ENCODE measurements at regions of chr20 and their contacts with region 1.

Region 1: GRCh38 chr20:60249436-60249835 is 291.2 kb downstream of the CDH26 start:
- DNase-seq: peak; percentile 81
- H3K4me3 ChIP-seq: no peak overlapping the region
- H3K27ac ChIP-seq: peak overlapping the region; percentile 71
- H3K27me3 ChIP-seq: no peaks in the 10 kb centered on the region
- CTCF ChIP-seq: no peak

Region 2: DNA sequence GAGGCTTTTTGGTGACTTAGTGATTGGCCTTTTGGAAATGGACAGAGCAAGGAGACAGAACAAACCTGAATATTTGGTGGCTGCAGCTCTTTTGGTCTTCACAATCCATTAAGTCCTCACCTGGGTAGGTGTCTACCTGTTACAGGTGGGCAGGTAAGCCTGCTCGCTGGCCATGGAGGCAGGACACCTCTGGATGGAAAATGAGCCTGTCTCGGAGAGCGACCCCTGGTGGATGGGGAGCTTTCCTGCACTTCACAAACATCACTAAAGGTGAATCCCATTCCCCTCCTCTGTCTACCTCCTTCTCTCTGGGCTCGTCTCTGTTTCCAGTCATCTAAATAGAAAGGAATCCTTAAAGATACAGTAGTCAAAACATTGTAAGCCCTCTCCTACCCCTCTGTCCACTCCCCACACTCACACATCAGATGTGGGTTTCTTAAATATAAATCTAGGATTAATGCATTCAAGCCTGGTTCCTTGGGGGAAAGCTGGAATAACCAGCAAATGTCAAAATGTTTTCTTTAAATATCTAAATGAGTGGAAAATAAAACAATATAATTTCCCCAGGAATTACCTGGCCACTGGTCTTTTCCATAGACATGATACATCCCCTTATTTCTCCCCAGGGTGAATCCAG is 13.6 kb after region 1 on chr20:
- CTCF ChIA-PET with region 1: interaction called, 18 read pairs
- POLR2A ChIA-PET with region 1: no interaction called
- DNase-seq: no peak
- H3K4me3 ChIP-seq: no peak overlapping the region
- H3K27ac ChIP-seq: no peak overlapping the region
- H3K27me3 ChIP-seq: peaks cover 15% of the 10 kb centered on the region
- CTCF ChIP-seq: peak; percentile 65